PC-3 (cell line): ENCODE measurements at regions of chr1 and their contacts with region 1.

Region 1: DNA sequence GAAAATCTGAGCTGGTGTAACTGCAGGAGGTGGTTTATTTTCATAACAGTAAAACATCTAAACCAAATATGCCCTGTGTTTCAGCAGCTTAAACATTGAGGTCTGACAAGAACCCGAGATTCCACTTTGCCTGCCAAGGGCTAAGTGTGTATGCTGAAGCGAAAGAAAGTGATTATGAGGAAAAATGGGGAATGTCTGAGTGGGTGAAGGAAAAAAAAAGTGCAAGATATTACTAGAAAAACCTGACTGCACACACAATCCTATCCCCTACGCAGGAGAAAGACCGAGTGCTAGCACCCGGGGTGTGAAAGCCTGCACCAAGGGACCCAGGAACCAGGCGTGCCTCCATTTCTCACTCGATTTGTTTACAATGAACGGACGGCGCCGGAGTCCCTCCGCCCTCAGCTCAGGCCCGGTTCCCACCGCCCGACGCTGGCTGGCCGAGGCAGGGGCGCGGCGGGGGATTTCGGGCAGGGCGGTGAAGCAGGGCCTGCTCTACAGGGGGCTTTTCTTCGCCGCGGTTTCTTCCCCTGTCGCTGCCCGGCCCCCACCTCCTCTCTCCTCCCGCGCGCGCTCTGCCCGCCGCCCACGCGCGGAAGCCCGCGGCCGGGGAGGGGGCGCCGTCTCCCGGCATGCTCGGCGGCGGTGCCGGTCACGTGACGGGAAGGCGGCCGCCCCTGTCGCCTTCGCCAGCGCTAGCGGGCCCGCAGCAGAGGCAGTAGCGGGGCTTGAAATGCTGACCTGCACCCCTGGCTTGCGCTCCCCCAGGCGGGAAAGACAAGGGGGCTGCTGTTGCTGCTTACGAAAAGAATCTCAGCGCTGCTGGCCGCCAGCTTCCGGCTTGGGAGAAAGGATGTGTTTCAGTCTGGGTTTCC is 35.9 kb downstream of the ITPKB start:
- DNase-seq: peak; percentile 64
- ATAC-seq: peak; percentile 77
- H3K4me3 ChIP-seq: peak overlapping the region; percentile 65
- H3K27ac ChIP-seq: peak overlapping the region; percentile 56
- H3K4me1 ChIP-seq: peaks cover 31% of the 10 kb centered on the region
- H3K27me3 ChIP-seq: no peaks in the 10 kb centered on the region
- CTCF ChIP-seq: no peak

Region 2: GRCh38 chr1:226662642-226663326 is 40.4 kb before region 1 on chr1:
- CTCF ChIA-PET with region 1: no interaction called
- POLR2A ChIA-PET with region 1: no interaction called
- intact Hi-C with region 1: loop called (anchors 5 kb)
- DNase-seq: peak; percentile 90
- ATAC-seq: peak; percentile 94
- H3K4me3 ChIP-seq: peak overlapping the region; percentile 35; the same call in 1 of the 2 replicates
- H3K27ac ChIP-seq: peak overlapping the region; percentile 27
- H3K4me1 ChIP-seq: peaks cover 35% of the 10 kb centered on the region
- H3K27me3 ChIP-seq: no peaks in the 10 kb centered on the region
- CTCF ChIP-seq: no peak

Region 3: DNA sequence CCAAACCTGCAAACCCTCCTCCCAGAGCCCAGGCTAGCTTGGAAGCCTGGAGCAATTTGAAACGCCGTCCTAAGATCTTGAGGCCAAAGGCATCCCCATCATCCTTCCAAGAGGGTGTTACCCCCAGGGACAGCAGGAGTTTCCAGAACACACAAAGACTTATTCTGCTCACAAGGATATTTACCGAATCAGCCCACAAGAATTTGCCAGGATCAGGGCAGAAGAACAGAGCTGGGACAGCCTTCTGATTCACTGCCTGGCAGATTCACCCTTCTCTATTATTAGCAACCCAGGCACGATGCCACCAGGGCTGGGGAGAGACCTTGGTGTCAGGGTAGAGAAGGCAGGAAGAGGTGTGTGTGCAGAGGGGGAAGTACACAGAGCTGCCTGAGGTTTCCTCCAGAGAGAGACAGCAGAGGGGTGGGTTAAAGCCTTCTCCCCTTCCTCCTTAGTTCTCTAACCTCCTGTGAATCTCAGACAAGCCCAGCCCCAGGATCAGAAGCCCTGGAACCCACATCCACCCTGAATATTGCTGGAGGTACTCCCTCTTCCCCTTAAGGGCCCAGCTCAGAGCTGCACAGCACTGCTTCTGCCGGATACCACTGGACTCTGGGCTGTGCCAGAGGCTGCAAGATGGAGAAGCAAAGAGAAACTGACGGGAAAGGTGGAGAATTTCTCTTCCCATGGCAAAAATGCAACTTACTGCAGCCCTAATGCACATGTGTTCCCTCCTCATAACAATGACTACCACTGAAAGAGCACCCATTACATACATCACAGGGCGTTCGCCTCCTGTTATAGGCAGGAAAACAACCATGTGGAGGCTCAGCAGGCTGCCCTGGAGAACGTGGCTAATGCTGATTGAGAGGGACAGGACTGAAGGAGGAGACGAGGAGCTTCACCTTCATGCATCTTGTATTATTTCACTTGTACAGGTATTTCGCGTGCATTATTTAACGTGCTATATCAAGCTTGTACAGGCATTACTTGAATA is 25.9 kb before region 1 on chr1:
- CTCF ChIA-PET with region 1: no interaction called
- POLR2A ChIA-PET with region 1: no interaction called
- intact Hi-C with region 1: loop called (anchors 1 kb)
- DNase-seq: peak; percentile 99
- ATAC-seq: peak; percentile 98
- H3K4me3 ChIP-seq: peak overlapping the region; percentile 4; the same call in 1 of the 2 replicates
- H3K27ac ChIP-seq: peak overlapping the region; percentile 73
- H3K4me1 ChIP-seq: peaks cover 29% of the 10 kb centered on the region
- H3K27me3 ChIP-seq: no peaks in the 10 kb centered on the region
- CTCF ChIP-seq: no peak

Region 4: GRCh38 chr1:226814751-226815496 is 111.7 kb after region 1 on chr1:
- CTCF ChIA-PET with region 1: interaction called, 5 read pairs
- POLR2A ChIA-PET with region 1: interaction called, 11 read pairs
- intact Hi-C with region 1: no loop called
- DNase-seq: peak; percentile 100
- ATAC-seq: peak; percentile 97
- H3K4me3 ChIP-seq: peak overlapping the region; percentile 8; the same call in 1 of the 2 replicates
- H3K27ac ChIP-seq: peak overlapping the region; percentile 90
- H3K4me1 ChIP-seq: peaks cover 35% of the 10 kb centered on the region
- H3K27me3 ChIP-seq: no peaks in the 10 kb centered on the region
- CTCF ChIP-seq: no peak

Region 5: DNA sequence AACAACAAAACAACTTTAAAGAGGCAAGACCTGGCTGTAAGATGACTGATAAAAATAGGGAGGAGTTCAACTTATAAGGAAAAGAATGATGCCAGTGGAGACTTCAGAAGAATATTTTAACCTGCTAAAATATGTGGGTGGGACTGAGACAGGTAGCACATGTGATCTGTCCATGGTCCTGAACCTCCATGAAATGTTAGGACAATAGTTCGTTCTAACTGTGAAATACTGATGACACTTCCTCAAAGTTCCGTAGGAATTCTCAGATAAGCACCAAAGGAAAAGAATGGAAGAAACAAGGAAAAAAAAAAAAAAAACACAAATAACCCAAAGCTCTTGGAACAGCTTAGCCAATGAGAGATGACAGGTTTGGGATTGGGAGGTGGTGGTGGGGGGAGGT is 570.4 kb after region 1 on chr1:
- CTCF ChIA-PET with region 1: no interaction called
- POLR2A ChIA-PET with region 1: no interaction called
- intact Hi-C with region 1: no loop called
- DNase-seq: peak; percentile 84
- ATAC-seq: peak; percentile 49; the same call in 1 of the 2 replicates
- H3K4me3 ChIP-seq: no peak overlapping the region
- H3K27ac ChIP-seq: no peak overlapping the region
- H3K4me1 ChIP-seq: 0 out of 2 replicates have a peak, but pooled peaks cover 4% of the 10 kb centered on the region
- H3K27me3 ChIP-seq: no peaks in the 10 kb centered on the region
- CTCF ChIP-seq: no peak

Region 6: DNA sequence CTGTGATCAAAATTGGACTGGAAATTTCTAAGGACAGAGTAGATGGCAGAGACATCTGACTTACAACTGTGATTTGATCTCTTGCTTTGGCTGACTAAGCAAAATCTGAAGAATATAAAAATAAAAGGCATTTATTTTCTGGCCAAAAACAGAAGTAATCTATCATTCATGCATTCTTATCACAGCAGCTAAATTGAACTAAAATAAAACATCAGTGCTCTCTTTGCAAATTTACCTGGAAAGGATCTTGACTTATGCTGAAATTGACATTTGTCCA is 778.8 kb after region 1 on chr1:
- CTCF ChIA-PET with region 1: no interaction called
- POLR2A ChIA-PET with region 1: no interaction called
- intact Hi-C with region 1: no loop called
- DNase-seq: no peak
- ATAC-seq: no peak
- H3K4me3 ChIP-seq: no peak overlapping the region
- H3K27ac ChIP-seq: no peak overlapping the region
- H3K4me1 ChIP-seq: no peaks in the 10 kb centered on the region
- H3K27me3 ChIP-seq: peaks cover 16% of the 10 kb centered on the region; the same call in 1 of the 2 replicates
- CTCF ChIP-seq: no peak